HepG2 (cell line): ENCODE measurements at regions of chr1 and their contacts with region 1.

Region 1: GRCh38 chr1:54850737-54851136 is 36.3 kb downstream of the DHCR24 start:
- DNase-seq: no peak
- ATAC-seq: no peak
- H3K4me3 ChIP-seq: no peak overlapping the region
- H3K27ac ChIP-seq: no peak overlapping the region
- H3K4me1 ChIP-seq: peaks cover 2% of the 10 kb centered on the region
- H3K27me3 ChIP-seq: no peaks in the 10 kb centered on the region
- CTCF ChIP-seq: no peak
- EP300 ChIP-seq: no peak
- POLR2A ChIP-seq: peak in 1 of 2 experiments; percentile 45; a peak in 1 of 4 replicates
- RAD21 ChIP-seq: no peak

Region 2: DNA sequence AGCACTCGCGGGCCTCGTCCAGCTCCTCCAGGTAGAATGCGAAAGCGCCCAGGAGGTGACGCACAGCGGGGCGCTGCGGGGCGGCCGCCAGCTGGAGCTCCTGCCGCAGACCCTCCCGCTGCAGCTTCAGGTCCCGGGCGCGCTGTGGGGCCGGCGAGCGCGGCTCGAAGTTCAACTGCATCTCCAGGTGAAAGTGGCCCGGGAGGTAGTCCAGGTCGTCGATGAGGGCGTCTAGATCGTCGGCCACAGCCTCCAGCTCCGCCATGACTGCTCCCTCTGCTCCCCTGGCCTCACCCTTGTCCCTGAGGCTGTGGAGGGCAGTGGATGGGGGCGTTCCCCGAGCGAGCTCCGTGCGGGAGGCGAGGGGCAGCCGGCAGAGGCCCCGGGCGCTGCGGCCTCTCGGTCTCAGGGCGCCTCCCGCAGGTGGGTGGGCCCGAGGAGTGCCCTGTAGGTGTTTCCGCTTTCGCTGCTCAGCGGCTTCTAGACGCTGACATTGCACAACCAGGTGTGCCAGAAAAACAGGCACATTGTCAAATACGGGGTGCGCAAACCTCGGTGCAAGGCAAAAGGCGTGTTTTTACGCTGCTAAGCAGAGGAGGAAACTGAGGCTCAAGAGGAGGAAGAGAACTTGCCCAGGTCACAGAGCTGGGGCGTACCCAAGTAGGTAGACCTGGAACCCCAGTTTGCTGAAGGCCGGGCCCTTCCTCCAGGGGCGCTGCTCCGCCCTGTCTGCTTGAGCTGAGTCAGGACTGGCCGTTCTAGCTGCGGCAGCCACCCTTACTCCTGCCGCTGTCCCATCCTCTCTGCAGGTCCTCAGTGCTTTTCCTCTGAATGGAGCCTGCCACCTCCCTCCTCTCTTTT is 49.6 kb before region 1 on chr1 and contains the start of gene TTC22:
- CTCF ChIA-PET with region 1: no interaction called
- POLR2A ChIA-PET with region 1: no interaction called
- in situ Hi-C with region 1: no loop called
- intact Hi-C with region 1: no loop called
- DNase-seq: no peak
- ATAC-seq: peak; percentile 58
- H3K4me3 ChIP-seq: no peak within 1 kb of the TSS
- H3K27ac ChIP-seq: no peak within 1 kb of the TSS
- H3K4me1 ChIP-seq: peaks cover 33% of the 10 kb centered on the region
- H3K27me3 ChIP-seq: no peaks in the 10 kb centered on the region
- CTCF ChIP-seq: peak; percentile 34
- EP300 ChIP-seq: no peak
- POLR2A ChIP-seq: no peak
- RAD21 ChIP-seq: no peak
- total RNA-seq, gene TTC22: not detected in 2 replicates

Region 3: GRCh38 chr1:54865238-54866073 is 14.7 kb after region 1 on chr1:
- CTCF ChIA-PET with region 1: no interaction called
- POLR2A ChIA-PET with region 1: interaction called, 52 read pairs
- in situ Hi-C with region 1: no loop called
- intact Hi-C with region 1: no loop called
- DNase-seq: peak; percentile 89
- ATAC-seq: peak; percentile 55
- H3K4me3 ChIP-seq: peak overlapping the region; percentile 47 to 59 (median 55); a peak in 5 of 6 replicates
- H3K27ac ChIP-seq: peak overlapping the region; percentile 90
- H3K4me1 ChIP-seq: peaks cover 100% of the 10 kb centered on the region
- H3K27me3 ChIP-seq: no peaks in the 10 kb centered on the region
- CTCF ChIP-seq: 0 out of 2 replicates have a peak, but pooled peaks have one; percentile 8
- EP300 ChIP-seq: peak in 1 of 2 experiments; percentile 63; a peak in 1 of 4 replicates
- POLR2A ChIP-seq: peak; percentile 56 to 57
- RAD21 ChIP-seq: 0 out of 2 replicates have a peak, but pooled peaks have one; percentile 14

Region 4: GRCh38 chr1:54944610-54945544 is 94.1 kb after region 1 on chr1:
- CTCF ChIA-PET with region 1: no interaction called
- POLR2A ChIA-PET with region 1: no interaction called
- in situ Hi-C with region 1: no loop called
- intact Hi-C with region 1: no loop called
- DNase-seq: peak; percentile 70
- ATAC-seq: peak; percentile 82
- H3K4me3 ChIP-seq: peak overlapping the region; percentile 7 to 65 (median 56); a peak in 4 of 6 replicates
- H3K27ac ChIP-seq: no peak overlapping the region
- H3K4me1 ChIP-seq: peaks cover 21% of the 10 kb centered on the region
- H3K27me3 ChIP-seq: no peaks in the 10 kb centered on the region; a peak in 1 of 5 replicates
- CTCF ChIP-seq: peak; percentile 81
- EP300 ChIP-seq: no peak
- POLR2A ChIP-seq: no peak
- RAD21 ChIP-seq: peak; percentile 67